ENCODE measurements at regions of chr1 and their contacts with region 1.

Region 1: GRCh38 chr1:10209905-10210810 is at the start of gene KIF1B:
- DNase-seq: peak; percentile 98
- ATAC-seq: peak; percentile 87
- H3K4me3 ChIP-seq: peak within 1 kb of the TSS; percentile 100
- H3K27ac ChIP-seq: peak within 1 kb of the TSS; percentile 80
- H3K4me1 ChIP-seq: peaks cover 18% of the 10 kb centered on the region
- H3K27me3 ChIP-seq: no peaks in the 10 kb centered on the region
- CTCF ChIP-seq: peak; percentile 93
- total RNA-seq, gene KIF1B: 21.4 and 24.2 TPM in 2 replicates

Region 2: GRCh38 chr1:10253755-10254154 is 43.6 kb after region 1 on chr1:
- CTCF ChIA-PET with region 1: interaction called, 9 read pairs
- POLR2A ChIA-PET with region 1: no interaction called
- intact Hi-C with region 1: loop called (anchors 5 kb)
- DNase-seq: peak; percentile 2
- ATAC-seq: peak; percentile 7; the same call in 1 of the 2 replicates
- H3K4me3 ChIP-seq: no peak overlapping the region
- H3K27ac ChIP-seq: no peak overlapping the region
- H3K4me1 ChIP-seq: peaks cover 19% of the 10 kb centered on the region
- H3K27me3 ChIP-seq: no peaks in the 10 kb centered on the region
- CTCF ChIP-seq: no peak

Region 3: GRCh38 chr1:10338047-10338446 is 127.9 kb after region 1 on chr1:
- CTCF ChIA-PET with region 1: interaction called, 6 read pairs
- POLR2A ChIA-PET with region 1: no interaction called
- intact Hi-C with region 1: loop called (anchors 2 kb)
- DNase-seq: peak; percentile 40
- ATAC-seq: peak; percentile 96
- H3K4me3 ChIP-seq: no peak overlapping the region
- H3K27ac ChIP-seq: no peak overlapping the region
- H3K4me1 ChIP-seq: 0 out of 2 replicates have a peak, but pooled peaks cover 3% of the 10 kb centered on the region
- H3K27me3 ChIP-seq: no peaks in the 10 kb centered on the region
- CTCF ChIP-seq: peak; percentile 86